Activated CD8-positive, alpha-beta T cell treated with anti-CD3 and anti-CD28 coated beads for 36 hours (primary cell): ENCODE measurements at regions of chr9 and their contacts with region 1.

Region 1: GRCh38 chr9:111994831-111995458 is 98.3 kb downstream of the UGCG start:
- DNase-seq: no peak
- ATAC-seq: peak; percentile 67
- H3K4me3 Mint-ChIP-seq: no peak overlapping the region
- H3K27ac Mint-ChIP-seq: peak overlapping the region; percentile 63
- H3K4me1 Mint-ChIP-seq: peaks cover 35% of the 10 kb centered on the region
- H3K27me3 Mint-ChIP-seq: no peaks in the 10 kb centered on the region
- CTCF ChIP-seq: no peak

Region 2: GRCh38 chr9:111945216-111945615 is 49.7 kb before region 1 on chr9:
- CTCF ChIA-PET with region 1: no interaction called
- POLR2A ChIA-PET with region 1: no interaction called
- intact Hi-C with region 1: no loop called
- DNase-seq: peak; percentile 66
- ATAC-seq: peak; percentile 69
- H3K4me3 Mint-ChIP-seq: no peak overlapping the region
- H3K27ac Mint-ChIP-seq: no peak overlapping the region
- H3K4me1 Mint-ChIP-seq: peaks cover 16% of the 10 kb centered on the region
- H3K27me3 Mint-ChIP-seq: no peaks in the 10 kb centered on the region
- CTCF ChIP-seq: no peak

Region 3: DNA sequence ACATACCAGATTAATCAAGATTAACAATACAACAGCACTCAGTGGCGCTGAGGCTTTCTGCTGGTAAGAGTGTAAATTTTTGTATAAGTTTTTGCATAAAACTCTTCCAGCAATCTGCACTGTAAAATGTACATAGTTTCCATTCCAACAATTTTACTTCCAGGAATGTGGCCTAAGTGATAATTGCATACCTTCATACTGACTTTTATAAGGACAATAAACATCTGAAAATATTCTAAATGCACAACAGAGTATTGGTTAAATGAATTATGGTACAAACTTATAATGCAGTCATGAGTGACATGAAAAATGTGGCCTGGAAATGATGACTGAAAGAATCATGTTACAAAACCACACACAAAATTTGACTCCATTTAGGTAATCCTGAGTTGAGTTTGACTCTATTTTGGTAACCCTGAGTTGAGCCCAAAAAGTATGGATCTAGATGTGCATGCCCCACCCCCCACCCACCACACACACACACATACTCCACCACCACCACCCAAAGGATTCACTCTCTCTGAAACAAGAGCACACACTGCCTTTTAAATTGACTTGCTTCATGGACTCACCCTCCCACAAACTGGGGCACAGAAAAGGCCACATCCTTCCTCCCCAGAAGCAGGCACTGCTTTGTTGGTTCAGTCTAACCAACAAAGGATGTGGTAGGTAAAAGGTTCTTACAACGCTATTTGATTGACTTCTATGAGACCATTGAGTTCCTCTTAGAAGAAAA is 42.5 kb after region 1 on chr9:
- CTCF ChIA-PET with region 1: interaction called, 5 read pairs
- POLR2A ChIA-PET with region 1: interaction called, 5 read pairs
- intact Hi-C with region 1: loop called (anchors 2 kb)
- DNase-seq: peak; percentile 87
- ATAC-seq: peak; percentile 93
- H3K4me3 Mint-ChIP-seq: peak overlapping the region; percentile 0
- H3K27ac Mint-ChIP-seq: peak overlapping the region; percentile 65
- H3K4me1 Mint-ChIP-seq: peaks cover 48% of the 10 kb centered on the region
- H3K27me3 Mint-ChIP-seq: peaks cover 21% of the 10 kb centered on the region
- CTCF ChIP-seq: no peak